Activated T-helper 2 cell treated with anti-CD3 and anti-CD28 coated beads, Interferon-gamma antibody, Interleukin-2, Interleukin-4, amounts not matched to agents 10 μg/mL and 5 μg/mL and 100 μg/mL, durations not matched to agents 14 hours and 24 hours and 36 hours (primary cell): ENCODE measurements at regions of chr11 and their contacts with region 1.

Region 1: GRCh38 chr11:108237058-108237481 is 14.2 kb downstream of the ATM start:
- DNase-seq: no peak
- H3K4me3 Mint-ChIP-seq: peak overlapping the region; percentile 66
- H3K27ac Mint-ChIP-seq: peak overlapping the region; percentile 83
- H3K4me1 Mint-ChIP-seq: peaks cover 59% of the 10 kb centered on the region
- H3K27me3 Mint-ChIP-seq: no peaks in the 10 kb centered on the region

Region 2: GRCh38 chr11:108199446-108200321 is 37.4 kb before region 1 on chr11:
- intact Hi-C with region 1: loop called (anchors 1 kb)
- DNase-seq: no peak
- H3K4me3 Mint-ChIP-seq: no peak overlapping the region
- H3K27ac Mint-ChIP-seq: peak overlapping the region; percentile 73
- H3K4me1 Mint-ChIP-seq: peaks cover 42% of the 10 kb centered on the region
- H3K27me3 Mint-ChIP-seq: no peaks in the 10 kb centered on the region

Region 3: GRCh38 chr11:108302121-108302785 is 65.2 kb after region 1 on chr11:
- intact Hi-C with region 1: loop called (anchors 2 kb)
- DNase-seq: no peak
- H3K4me3 Mint-ChIP-seq: no peak overlapping the region
- H3K27ac Mint-ChIP-seq: no peak overlapping the region
- H3K4me1 Mint-ChIP-seq: peaks cover 9% of the 10 kb centered on the region
- H3K27me3 Mint-ChIP-seq: no peaks in the 10 kb centered on the region